ENCODE measurements at regions of chr10 and their contacts with region 1.

Region 1: DNA sequence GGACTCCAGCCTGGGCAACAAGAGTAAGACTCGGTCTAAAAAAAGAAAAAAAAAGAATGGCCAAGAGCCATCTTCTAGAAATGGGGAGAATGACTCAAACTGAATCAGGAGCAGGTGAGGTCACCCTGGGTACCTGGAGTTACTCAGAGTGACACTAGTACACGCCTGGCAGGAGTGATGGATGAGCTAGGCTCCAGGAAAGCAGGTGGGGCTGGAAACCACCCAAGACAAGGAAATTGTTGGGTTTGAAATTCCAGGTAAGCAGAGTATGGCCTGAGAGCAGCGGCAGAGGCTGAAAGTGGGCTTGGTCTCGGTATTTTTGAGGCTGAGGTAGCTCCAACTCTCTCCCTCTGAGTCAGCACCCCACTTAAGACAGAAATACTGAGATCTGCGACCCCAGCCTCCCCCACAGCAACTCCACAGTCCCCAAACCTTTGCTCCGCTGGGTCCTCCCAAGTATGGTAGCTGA is 18.5 kb downstream of the DDIT4 start:
- DNase-seq: peak; percentile 84
- ATAC-seq: peak; percentile 57
- H3K4me3 Mint-ChIP-seq: peak overlapping the region; percentile 56
- H3K27ac Mint-ChIP-seq: peak overlapping the region; percentile 99
- H3K4me1 Mint-ChIP-seq: peaks cover 63% of the 10 kb centered on the region
- H3K27me3 Mint-ChIP-seq: no peaks in the 10 kb centered on the region

Region 2: GRCh38 chr10:72273410-72274212 is 18.6 kb before region 1 on chr10 and contains the start of gene DDIT4:
- CTCF ChIA-PET with region 1: interaction called, 27 read pairs
- POLR2A ChIA-PET with region 1: interaction called, 137 read pairs
- intact Hi-C with region 1: loop called (anchors 1 kb)
- DNase-seq: peak; percentile 100
- ATAC-seq: peak; percentile 84
- H3K4me3 Mint-ChIP-seq: peak within 1 kb of the TSS; percentile 95
- H3K27ac Mint-ChIP-seq: peak within 1 kb of the TSS; percentile 99
- H3K4me1 Mint-ChIP-seq: peaks cover 44% of the 10 kb centered on the region
- H3K27me3 Mint-ChIP-seq: no peaks in the 10 kb centered on the region
- total RNA-seq, gene DDIT4: 750 to 1,039 TPM

Region 3: DNA sequence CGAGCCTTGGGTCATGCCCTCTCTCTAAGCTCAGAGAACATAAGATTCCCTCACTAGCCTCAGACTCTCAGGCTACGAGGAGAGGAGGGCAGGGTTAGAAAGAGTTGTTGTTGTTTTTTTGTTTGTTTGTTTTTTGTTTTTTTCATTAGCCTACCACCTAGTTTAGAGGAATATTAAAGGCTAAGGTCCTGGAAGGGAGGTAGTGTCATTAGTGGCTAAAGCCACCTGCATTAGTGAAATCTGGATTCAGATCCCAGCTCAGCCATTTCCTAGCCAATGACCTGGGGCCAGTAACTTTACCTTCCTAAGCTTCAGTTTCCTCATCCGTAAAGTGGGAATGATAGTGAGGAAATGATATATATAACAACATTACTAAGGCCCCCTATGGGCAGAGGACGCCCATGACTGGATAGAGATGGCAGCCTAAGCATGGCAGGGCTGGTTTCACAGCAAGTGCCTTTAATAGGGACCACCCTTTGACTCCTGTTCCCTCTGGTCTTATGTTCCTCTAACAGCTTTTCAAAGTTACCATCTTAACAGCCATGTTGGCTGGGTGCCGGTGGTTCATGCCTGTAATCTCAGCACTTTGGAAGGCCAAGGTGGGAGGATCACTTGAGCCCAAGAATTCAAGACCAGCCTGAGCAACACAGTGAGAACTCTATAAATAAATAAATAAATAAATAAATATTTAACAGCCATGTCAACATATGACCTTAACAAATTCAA is 13.4 kb before region 1 on chr10:
- CTCF ChIA-PET with region 1: interaction called, 27 read pairs
- POLR2A ChIA-PET with region 1: interaction called, 137 read pairs
- intact Hi-C with region 1: no loop called
- DNase-seq: no peak
- ATAC-seq: no peak
- H3K4me3 Mint-ChIP-seq: no peak overlapping the region
- H3K27ac Mint-ChIP-seq: peak overlapping the region; percentile 74
- H3K4me1 Mint-ChIP-seq: peaks cover 30% of the 10 kb centered on the region
- H3K27me3 Mint-ChIP-seq: no peaks in the 10 kb centered on the region

Region 4: DNA sequence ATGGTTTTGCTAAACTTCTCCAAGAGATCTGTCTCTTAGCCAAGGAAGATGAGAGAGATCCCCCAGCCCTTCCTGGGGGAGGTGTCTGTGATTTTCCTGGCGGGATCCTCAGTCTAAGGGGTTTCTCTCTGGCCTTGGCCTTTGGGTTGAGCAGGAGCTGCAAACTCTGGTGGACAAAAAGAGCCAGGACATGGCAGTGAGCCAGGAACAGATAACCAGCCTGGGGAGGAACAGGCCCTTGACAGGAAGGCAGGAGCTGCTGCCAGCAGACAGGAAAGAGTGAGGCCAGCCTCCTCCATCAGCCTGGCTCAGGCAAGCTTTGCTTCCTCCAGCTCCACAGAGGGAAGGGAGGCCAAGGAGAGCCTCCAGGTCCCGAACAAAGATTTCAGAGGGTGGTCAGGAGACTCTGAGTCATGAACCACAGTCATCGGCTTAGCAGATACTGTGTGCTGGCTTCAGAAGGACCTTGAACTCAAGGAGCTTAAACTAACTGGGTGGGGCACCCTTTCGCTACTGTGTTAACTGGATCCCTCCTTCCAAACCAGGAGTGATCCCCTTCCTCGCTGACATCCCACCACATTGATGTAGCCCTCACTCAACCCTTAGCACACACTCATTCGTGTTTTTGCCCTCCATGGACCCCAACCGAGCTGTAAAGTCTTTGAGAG is 16.2 kb after region 1 on chr10:
- CTCF ChIA-PET with region 1: interaction called, 13 read pairs
- POLR2A ChIA-PET with region 1: interaction called, 43 read pairs
- intact Hi-C with region 1: loop called in 1 of 2 experiments (anchors 1 kb)
- DNase-seq: peak; percentile 68
- ATAC-seq: peak; percentile 26
- H3K4me3 Mint-ChIP-seq: peak overlapping the region; percentile 9
- H3K27ac Mint-ChIP-seq: peak overlapping the region; percentile 89
- H3K4me1 Mint-ChIP-seq: peaks cover 74% of the 10 kb centered on the region
- H3K27me3 Mint-ChIP-seq: no peaks in the 10 kb centered on the region

Measured in activated CD4-positive, alpha-beta T cell treated with anti-CD3 and anti-CD28 coated beads for 36 hours (primary cell).